H1 (cell line): ENCODE measurements at regions of chr13 and their contacts with region 1.

Region 1: GRCh38 chr13:110352735-110353134 is 45.7 kb downstream of the COL4A2 start:
- DNase-seq: peak in 1 of 2 experiments; percentile 85
- H3K4me3 ChIP-seq: no peak overlapping the region
- H3K27ac ChIP-seq: no peak overlapping the region
- H3K4me1 ChIP-seq: peaks cover 3 to 17% (median 10%) of the 10 kb centered on the region in 4 experiments; a peak in 6 of 7 replicates
- H3K27me3 ChIP-seq: no peaks in the 10 kb centered on the region
- CTCF ChIP-seq: peak; percentile 76 to 94 (median 83)
- EP300 ChIP-seq: no peak
- POLR2A ChIP-seq: no peak
- RAD21 ChIP-seq: peak; percentile 28 to 59; a peak in 3 of 4 replicates

Region 2: GRCh38 chr13:110150384-110151101 is 202.2 kb before region 1 on chr13:
- CTCF ChIA-PET with region 1: no interaction called
- POLR2A ChIA-PET with region 1: no interaction called
- DNase-seq: no peak
- H3K4me3 ChIP-seq: no peak overlapping the region
- H3K27ac ChIP-seq: no peak overlapping the region
- H3K4me1 ChIP-seq: peaks cover 0 to 2% (median 0%) of the 10 kb centered on the region in 4 experiments; a peak in 3 of 7 replicates
- H3K27me3 ChIP-seq: no peaks in the 10 kb centered on the region
- CTCF ChIP-seq: no peak
- EP300 ChIP-seq: no peak
- POLR2A ChIP-seq: no peak
- RAD21 ChIP-seq: no peak

Region 3: GRCh38 chr13:110340812-110341444 is 11.8 kb before region 1 on chr13:
- CTCF ChIA-PET with region 1: interaction called, 19 read pairs
- POLR2A ChIA-PET with region 1: interaction called, 3 read pairs
- DNase-seq: no peak
- H3K4me3 ChIP-seq: no peak overlapping the region
- H3K27ac ChIP-seq: no peak overlapping the region
- H3K4me1 ChIP-seq: peaks cover 3 to 20% (median 11%) of the 10 kb centered on the region in 4 experiments; a peak in 6 of 7 replicates
- H3K27me3 ChIP-seq: no peaks in the 10 kb centered on the region
- CTCF ChIP-seq: no peak
- EP300 ChIP-seq: no peak
- POLR2A ChIP-seq: no peak
- RAD21 ChIP-seq: no peak

Region 4: GRCh38 chr13:110371550-110372465 is 19.1 kb after region 1 on chr13:
- CTCF ChIA-PET with region 1: interaction called, 13 read pairs
- POLR2A ChIA-PET with region 1: no interaction called
- DNase-seq: no peak
- H3K4me3 ChIP-seq: no peak overlapping the region
- H3K27ac ChIP-seq: no peak overlapping the region
- H3K4me1 ChIP-seq: no peaks in the 10 kb centered on the region
- H3K27me3 ChIP-seq: no peaks in the 10 kb centered on the region
- CTCF ChIP-seq: no peak
- EP300 ChIP-seq: no peak
- POLR2A ChIP-seq: no peak
- RAD21 ChIP-seq: no peak

Region 5: DNA sequence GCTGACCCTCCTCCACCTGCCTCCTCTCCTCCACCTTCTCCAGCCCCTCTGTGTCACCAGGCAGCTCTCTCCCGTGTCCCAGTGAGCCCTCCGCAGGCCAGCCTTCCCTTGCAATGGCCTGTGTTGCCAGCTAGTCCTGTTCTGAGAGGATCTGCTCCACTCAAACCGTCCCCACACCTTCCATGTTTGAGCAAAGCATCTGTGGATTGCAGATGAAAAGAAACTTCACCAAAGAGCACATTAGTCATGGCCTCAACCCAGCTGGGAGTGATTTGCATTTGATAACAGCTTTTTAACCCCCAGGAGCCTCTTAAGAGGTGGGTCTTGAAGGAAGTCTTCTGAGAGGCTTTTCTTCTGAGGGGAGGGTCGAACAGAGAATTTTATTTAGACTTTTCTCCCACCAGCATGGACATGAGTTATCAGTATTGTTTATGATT is 27.2 kb after region 1 on chr13:
- CTCF ChIA-PET with region 1: interaction called, 12 read pairs
- POLR2A ChIA-PET with region 1: no interaction called
- DNase-seq: peak in 1 of 2 experiments; percentile 59
- H3K4me3 ChIP-seq: peak overlapping the region in 1 of 4 experiments; percentile 25; a peak in 1 of 8 replicates
- H3K27ac ChIP-seq: no peak overlapping the region
- H3K4me1 ChIP-seq: peaks cover 3 to 15% (median 9%) of the 10 kb centered on the region in 4 experiments
- H3K27me3 ChIP-seq: peaks cover 0 to 3% (median under 1%) of the 10 kb centered on the region in 4 experiments; a peak in 2 of 7 replicates
- CTCF ChIP-seq: no peak
- EP300 ChIP-seq: no peak
- POLR2A ChIP-seq: no peak
- RAD21 ChIP-seq: no peak; a peak in 1 of 4 replicates

Region 6: DNA sequence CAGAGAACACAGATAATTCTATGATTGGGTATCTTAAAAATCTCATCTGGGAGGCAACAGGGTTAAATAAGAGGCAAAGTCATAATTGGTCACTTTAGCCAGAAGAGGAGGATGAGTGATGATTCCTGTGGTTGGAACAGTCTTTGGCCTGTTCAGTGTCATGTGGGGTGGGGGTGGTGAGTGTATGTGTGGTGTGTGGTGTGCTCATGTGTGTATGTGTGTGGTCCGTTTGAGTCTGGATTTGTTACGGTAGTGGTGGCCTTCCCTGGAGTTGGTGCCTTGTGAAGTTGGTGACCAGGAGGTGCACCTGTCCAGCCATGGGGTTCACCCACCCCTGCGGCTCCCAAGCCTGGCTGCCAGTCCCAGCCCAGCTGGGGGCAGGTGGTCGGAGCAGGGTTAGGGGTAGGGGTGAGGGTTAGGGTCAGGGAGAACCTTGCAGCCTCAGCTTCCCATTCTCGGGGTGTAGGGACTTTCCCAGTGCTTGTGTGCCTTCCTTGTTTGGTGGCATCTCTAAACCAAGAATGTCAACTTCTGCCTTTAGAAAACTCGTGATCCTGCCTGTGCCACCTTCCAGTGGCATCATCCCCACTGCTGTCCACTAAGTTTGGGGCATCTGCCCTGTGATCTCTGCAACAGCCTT is 111.3 kb after region 1 on chr13:
- CTCF ChIA-PET with region 1: no interaction called
- POLR2A ChIA-PET with region 1: no interaction called
- DNase-seq: no peak
- H3K4me3 ChIP-seq: no peak overlapping the region
- H3K27ac ChIP-seq: no peak overlapping the region
- H3K4me1 ChIP-seq: peaks cover 0 to 3% (median 1%) of the 10 kb centered on the region in 4 experiments; a peak in 2 of 7 replicates
- H3K27me3 ChIP-seq: no peaks in the 10 kb centered on the region
- CTCF ChIP-seq: no peak
- EP300 ChIP-seq: no peak
- POLR2A ChIP-seq: no peak
- RAD21 ChIP-seq: no peak